ENCODE measurements at regions of chr5 and their contacts with region 1.

Region 1: DNA sequence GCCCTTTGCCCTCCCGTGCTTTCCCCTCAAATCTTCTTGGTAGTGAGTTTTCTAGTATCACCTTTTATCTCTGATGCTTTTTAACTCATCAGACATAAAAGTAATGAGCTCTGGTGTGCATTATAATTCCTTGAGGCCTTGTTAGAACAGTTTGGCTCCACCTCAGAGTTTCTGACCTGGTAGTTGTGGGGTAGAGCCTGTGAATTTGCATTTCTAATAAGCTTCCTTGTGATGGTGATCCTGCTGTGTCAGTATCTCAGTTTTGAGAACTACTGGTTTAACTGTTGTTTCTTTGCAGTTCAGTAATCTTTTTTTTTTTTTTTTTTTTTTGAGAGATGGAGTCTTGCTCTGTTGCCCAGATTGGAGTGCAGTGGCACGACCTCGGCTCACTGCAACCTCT is 31.1 kb downstream of the UBE2D2 start:
- DNase-seq: no peak
- H3K4me3 ChIP-seq: no peak overlapping the region
- H3K27ac ChIP-seq: no peak overlapping the region
- H3K4me1 ChIP-seq: peaks cover 0 to 2% (median 0%) of the 10 kb centered on the region in 4 experiments; a peak in 1 of 7 replicates
- H3K27me3 ChIP-seq: no peaks in the 10 kb centered on the region
- CTCF ChIP-seq: no peak
- EP300 ChIP-seq: no peak
- POLR2A ChIP-seq: no peak
- RAD21 ChIP-seq: no peak

Region 2: GRCh38 chr5:139574641-139575312 is 17.5 kb before region 1 on chr5:
- CTCF ChIA-PET with region 1: interaction called, 13 read pairs
- POLR2A ChIA-PET with region 1: interaction called, 12 read pairs
- DNase-seq: no peak
- H3K4me3 ChIP-seq: no peak overlapping the region
- H3K27ac ChIP-seq: no peak overlapping the region
- H3K4me1 ChIP-seq: peaks cover 0 to 7% (median 0%) of the 10 kb centered on the region in 4 experiments; a peak in 2 of 7 replicates
- H3K27me3 ChIP-seq: no peaks in the 10 kb centered on the region
- CTCF ChIP-seq: peak in 2 of 3 experiments; percentile 48 to 67; a peak in 2 of 4 replicates
- EP300 ChIP-seq: no peak
- POLR2A ChIP-seq: no peak
- RAD21 ChIP-seq: peak; percentile 57 to 63

Region 3: DNA sequence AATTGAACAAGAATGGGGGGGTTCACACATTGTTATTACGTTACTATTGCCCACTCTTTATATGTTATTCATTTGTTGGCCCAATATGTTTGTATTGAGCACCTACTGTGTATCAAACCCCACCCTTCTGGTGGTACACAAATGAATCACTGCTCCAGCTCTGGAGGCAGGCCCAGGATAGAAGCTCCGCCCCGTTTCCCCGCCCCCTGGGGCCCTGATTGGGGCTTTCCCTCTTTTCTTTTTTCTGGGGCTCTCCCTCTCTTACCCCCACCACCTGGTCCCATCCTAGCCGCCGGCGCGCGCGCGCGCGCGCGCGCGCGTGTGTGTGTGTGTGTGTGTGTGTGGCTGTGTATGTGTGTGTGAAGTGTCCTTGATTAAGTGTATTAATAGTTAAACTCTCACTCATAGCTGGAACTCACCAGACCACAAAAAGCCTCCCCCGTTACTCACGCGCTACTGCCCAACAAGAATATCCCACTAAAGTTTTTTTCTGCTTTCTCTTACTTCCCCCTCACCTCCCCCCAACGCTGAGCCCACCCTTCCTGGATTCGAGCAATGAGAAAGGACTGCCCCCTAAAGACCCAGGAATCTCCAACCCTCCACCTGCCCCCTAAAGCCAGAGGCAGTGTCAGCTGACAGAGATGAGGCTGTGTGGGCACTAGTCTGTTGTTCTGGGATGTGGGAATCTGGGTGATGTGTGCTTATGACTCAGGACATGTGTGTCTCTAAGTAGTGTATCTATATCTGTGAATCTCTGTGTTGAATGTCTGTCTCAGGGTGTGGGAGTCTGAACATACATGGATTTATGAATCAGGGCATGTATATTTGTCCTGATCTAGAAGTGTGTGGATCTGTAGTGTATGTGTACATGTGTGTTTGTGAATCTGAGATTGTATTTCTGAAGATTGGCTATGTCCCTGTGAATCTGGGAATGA is 59.8 kb after region 1 on chr5:
- CTCF ChIA-PET with region 1: no interaction called
- POLR2A ChIA-PET with region 1: no interaction called
- DNase-seq: peak in 1 of 2 experiments; percentile 90
- H3K4me3 ChIP-seq: peak overlapping the region in 3 of 4 experiments; percentile 2 to 90 (median 14); a peak in 5 of 8 replicates
- H3K27ac ChIP-seq: no peak overlapping the region
- H3K4me1 ChIP-seq: peaks cover 20 to 53% (median 50%) of the 10 kb centered on the region in 4 experiments
- H3K27me3 ChIP-seq: peaks cover 0 to 4% (median 0%) of the 10 kb centered on the region in 4 experiments; a peak in 2 of 7 replicates
- CTCF ChIP-seq: no peak
- EP300 ChIP-seq: no peak
- POLR2A ChIP-seq: no peak
- RAD21 ChIP-seq: no peak

Measured in H1 (cell line).